Prostate gland (tissue), 2 donors: ENCODE measurements at regions of chr10 and their contacts with region 1.

Region 1: GRCh38 chr10:119933179-119933578 is 40.6 kb downstream of the SEC23IP start:
- DNase-seq: no peak
- H3K4me3 ChIP-seq: no peak overlapping the region
- H3K27ac ChIP-seq: no peak overlapping the region
- H3K4me1 ChIP-seq: no peaks in the 10 kb centered on the region
- H3K27me3 ChIP-seq: no peaks in the 10 kb centered on the region
- CTCF ChIP-seq: peak in 3 of 4 experiments; percentile 13 to 39 (median 18)
- POLR2A ChIP-seq: no peak

Region 2: DNA sequence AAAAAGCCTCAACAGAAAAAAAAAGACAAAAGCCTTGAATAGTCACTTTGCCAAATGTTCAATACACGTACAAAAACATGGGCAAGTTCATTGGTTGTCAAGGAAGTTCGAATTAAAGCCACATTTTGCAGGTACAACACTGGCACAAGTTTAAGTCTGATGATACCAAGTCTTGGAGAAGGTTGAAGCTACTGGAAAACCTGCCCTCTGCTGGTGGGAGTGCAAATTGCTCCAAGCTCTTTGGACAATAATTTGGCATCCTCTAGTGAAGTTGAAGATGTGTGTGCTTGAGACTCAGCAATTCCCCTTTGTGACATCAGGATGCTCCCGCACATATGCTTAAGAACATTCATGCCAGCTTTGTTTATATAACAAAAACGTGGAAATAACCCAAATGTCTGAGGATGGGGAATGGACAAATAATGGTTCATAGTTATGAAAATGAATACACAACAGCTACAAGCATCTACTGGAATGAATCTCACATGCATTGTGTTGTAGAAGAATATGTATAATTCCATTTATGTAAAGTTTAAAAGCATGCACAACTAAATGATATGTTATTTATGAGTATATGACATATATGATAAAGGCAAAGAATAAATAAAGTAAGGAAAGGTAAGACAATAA is 403.8 kb after region 1 on chr10:
- intact Hi-C with region 1: loop called (anchors 5 kb)
- DNase-seq: peak; percentile 56
- H3K4me3 ChIP-seq: no peak overlapping the region
- H3K27ac ChIP-seq: no peak overlapping the region
- H3K4me1 ChIP-seq: no peaks in the 10 kb centered on the region
- H3K27me3 ChIP-seq: no peaks in the 10 kb centered on the region
- CTCF ChIP-seq: peak; percentile 46 to 85 (median 76)
- POLR2A ChIP-seq: no peak